Dorsolateral prefrontal cortex (tissue), 120 donors: ENCODE measurements at regions of chr6 and their contacts with region 1.

Region 1: DNA sequence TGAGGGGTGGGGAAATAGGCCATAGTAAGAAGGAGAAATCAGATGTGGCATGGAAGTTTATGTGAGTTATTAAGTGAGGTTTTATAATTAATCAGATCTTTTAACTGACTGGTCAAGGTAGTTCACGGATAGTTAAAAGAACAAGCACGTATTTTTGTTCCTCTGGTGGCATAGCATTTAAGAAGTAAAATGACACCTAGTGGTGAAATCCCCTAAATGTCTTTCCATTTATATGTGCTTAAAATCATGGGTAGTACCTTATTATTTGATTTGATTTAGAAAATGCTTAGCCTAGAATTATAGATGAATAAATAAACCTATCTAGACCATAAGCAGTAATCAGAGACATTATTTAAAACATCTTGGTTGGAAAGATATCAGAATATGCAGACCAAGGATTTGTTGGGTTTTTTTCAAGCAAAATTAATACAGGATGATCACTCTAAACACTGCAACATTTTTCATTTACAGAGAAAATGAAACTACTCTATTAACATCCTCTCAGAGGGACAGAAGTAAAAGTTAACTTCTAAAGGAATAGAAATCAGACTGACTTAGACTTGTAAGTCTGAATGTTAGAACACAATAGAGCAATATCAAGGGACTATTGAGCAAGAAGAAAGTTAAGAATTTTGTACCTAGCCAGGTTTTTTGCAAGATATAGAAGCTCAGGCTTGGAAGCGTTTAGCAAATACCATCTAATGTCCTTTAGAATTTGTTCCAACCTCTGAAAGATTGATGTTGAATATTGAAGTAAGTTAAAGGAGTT is 81.1 kb downstream of the STXBP5 start:
- DNase-seq: no peak
- H3K4me3 ChIP-seq: no peak overlapping the region
- H3K27ac ChIP-seq: peak overlapping the region in 1 of 59 donors; percentile 5
- H3K27me3 ChIP-seq: no peaks in the 10 kb centered on the region
- CTCF ChIP-seq: peak; percentile 47 to 81 (median 66)

Region 2: GRCh38 chr6:147202516-147203312 is 82.6 kb before region 1 on chr6:
- intact Hi-C with region 1: loop called in 1 of 2 experiments (anchors 5 kb)
- DNase-seq: peak; percentile 63 to 94 (median 88)
- H3K4me3 ChIP-seq: peak overlapping the region; percentile 66 to 96 (median 84)
- H3K27ac ChIP-seq: peak overlapping the region; percentile 86 to 99 (median 98)
- H3K27me3 ChIP-seq: no peaks in the 10 kb centered on the region
- CTCF ChIP-seq: peak in 6 of 56 donors; percentile 1 to 30 (median 8)

Region 3: GRCh38 chr6:147331401-147331800 is 46.1 kb after region 1 on chr6:
- intact Hi-C with region 1: no loop called
- DNase-seq: no peak
- H3K4me3 ChIP-seq: no peak overlapping the region
- H3K27ac ChIP-seq: no peak overlapping the region
- H3K27me3 ChIP-seq: no peaks in the 10 kb centered on the region
- CTCF ChIP-seq: no peak